HepG2 (cell line): ENCODE measurements at regions of chr9 and their contacts with region 1.

Region 1: DNA sequence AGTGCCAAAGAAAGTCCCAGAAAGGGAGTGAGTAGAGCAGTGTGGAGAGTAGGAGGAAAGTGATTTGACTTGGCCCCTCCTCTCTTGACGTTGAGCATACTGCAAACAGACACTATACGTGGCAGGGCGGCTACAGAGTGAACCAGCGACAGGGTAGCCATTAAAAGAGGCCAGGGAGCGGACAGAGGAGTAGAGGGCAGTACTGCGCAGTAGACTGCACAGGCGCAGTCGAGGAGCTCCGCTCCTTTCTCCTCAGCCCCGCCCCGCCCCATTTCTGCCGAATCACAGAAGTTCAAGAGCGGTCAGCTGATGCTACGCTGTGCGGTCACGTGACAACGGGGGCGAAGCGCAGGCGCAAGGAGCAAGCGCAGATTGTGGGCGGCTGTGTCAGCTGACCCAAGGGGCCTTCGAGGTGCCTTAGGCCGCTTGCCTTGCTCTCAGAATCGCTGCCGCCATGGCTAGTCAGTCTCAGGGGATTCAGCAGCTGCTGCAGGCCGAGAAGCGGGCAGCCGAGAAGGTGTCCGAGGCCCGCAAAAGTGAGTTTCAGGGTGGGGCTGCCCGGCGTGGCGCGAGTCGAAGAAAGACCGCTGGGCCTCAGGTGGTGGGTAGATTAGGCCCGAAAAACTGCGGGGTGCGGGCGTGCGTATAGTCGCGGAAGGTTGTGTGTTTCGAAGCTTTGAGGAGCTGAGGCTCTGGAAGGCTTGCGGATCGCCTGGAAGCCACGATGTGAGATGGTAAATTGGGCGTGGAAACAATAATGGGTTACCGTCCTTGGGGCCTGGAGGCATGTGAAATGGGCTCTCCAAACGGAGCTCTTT is at the start of gene ATP6V1G1:
- DNase-seq: peak; percentile 97
- ATAC-seq: peak; percentile 97
- H3K4me3 ChIP-seq: peak within 1 kb of the TSS; percentile 84 to 96 (median 92)
- H3K27ac ChIP-seq: peak within 1 kb of the TSS; percentile 95
- H3K4me1 ChIP-seq: peaks cover 51% of the 10 kb centered on the region
- H3K27me3 ChIP-seq: peaks cover 0 to 4% of the 10 kb centered on the region in 2 experiments; a peak in 2 of 5 replicates
- CTCF ChIP-seq: peak; percentile 46
- EP300 ChIP-seq: peak in 1 of 2 experiments; percentile 15; a peak in 1 of 4 replicates
- POLR2A ChIP-seq: peak; percentile 93 to 97
- RAD21 ChIP-seq: no peak; the same call in 1 of the 2 replicates
- total RNA-seq, gene ATP6V1G1: 158 and 215 TPM in 2 replicates

Region 2: DNA sequence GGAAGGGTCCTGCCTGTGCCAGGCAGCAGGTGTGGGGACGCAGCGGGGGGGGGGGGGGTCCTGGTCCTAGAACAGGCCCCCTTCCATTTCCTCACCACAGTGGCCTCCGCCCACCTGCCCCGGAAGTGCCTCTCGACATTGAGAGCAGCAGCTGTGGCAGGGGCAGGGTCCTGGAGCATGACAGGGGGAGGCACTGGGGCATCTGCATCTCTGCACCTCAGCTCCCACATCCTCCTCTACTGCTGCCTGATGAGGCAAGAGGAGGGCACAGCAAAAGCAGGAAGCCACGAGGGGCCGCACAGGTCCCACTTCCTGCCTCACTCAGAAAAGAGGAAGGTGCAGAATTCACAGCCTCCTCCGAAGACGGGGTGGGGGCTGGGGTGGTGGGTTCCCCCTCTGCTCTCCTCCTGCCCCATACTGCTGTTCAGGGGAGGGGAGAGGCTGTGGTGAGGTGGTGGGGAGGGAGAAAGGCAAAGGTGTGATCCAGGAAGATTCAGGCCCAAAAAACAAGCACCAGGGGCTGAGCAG is 214.6 kb before region 1 on chr9:
- CTCF ChIA-PET with region 1: no interaction called
- POLR2A ChIA-PET with region 1: no interaction called
- in situ Hi-C with region 1: no loop called
- intact Hi-C with region 1: no loop called
- DNase-seq: no peak
- ATAC-seq: no peak
- H3K4me3 ChIP-seq: no peak overlapping the region
- H3K27ac ChIP-seq: no peak overlapping the region
- H3K4me1 ChIP-seq: no peaks in the 10 kb centered on the region
- H3K27me3 ChIP-seq: no peaks in the 10 kb centered on the region
- CTCF ChIP-seq: no peak
- EP300 ChIP-seq: no peak
- POLR2A ChIP-seq: no peak
- RAD21 ChIP-seq: no peak

Region 3: DNA sequence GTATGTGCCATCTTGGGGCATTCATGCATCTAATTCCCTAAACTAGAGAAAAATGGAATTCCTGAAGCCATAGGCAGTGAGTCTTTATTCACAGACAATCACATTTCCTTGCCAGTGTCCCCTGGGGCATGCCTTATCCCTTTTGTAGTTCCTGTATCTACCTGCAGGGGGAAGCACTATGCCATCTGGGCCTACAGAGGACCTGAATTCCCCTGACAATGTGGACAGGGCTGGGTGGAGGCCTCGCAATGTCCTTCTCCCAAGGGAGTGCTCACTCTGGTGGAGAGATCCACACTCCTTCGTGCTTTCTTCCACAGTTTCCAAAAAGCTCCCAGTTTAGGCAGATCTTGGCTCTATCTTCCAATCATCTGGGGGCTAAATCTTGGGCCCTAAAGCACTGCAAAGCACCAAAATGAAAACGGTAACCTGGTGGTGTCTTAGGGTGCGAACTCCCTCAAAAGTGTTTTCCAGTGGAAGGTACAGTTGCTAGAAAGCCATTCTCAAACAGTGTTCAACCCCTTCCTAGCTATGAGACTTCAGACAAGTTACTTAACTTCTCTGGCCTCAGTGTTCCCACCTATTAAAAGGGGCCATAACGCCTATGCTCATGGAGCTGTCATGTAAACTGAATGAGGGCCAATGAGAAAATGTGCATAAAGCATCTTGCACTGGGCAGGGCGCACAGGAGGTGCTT is 99.8 kb before region 1 on chr9:
- CTCF ChIA-PET with region 1: no interaction called
- POLR2A ChIA-PET with region 1: no interaction called
- in situ Hi-C with region 1: no loop called
- intact Hi-C with region 1: loop called (anchors 5 kb)
- DNase-seq: peak; percentile 71
- ATAC-seq: peak; percentile 99
- H3K4me3 ChIP-seq: no peak overlapping the region
- H3K27ac ChIP-seq: no peak overlapping the region
- H3K4me1 ChIP-seq: no peaks in the 10 kb centered on the region
- H3K27me3 ChIP-seq: no peaks in the 10 kb centered on the region
- CTCF ChIP-seq: peak; percentile 94
- EP300 ChIP-seq: no peak
- POLR2A ChIP-seq: no peak
- RAD21 ChIP-seq: peak; percentile 80

Region 4: DNA sequence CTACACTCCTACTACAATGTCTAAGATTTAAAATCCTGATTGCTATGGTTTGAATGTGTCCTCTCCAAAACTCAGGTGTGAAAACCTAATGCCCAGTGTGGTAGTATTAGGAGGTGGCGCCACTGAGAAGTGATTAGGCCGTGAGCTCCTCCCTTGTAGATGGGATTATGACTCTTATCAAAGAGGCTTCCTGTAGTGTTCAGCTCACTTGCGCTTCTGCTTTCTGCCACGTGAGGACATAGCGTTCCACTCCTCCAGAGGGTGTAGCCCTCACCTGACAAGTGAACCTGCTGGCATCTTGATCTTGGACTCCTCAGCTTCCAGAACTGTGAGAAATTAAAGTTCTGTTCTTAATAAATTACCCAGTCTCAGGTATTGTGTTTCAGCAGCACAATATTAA is 49.4 kb before region 1 on chr9:
- CTCF ChIA-PET with region 1: no interaction called
- POLR2A ChIA-PET with region 1: interaction called, 4 read pairs
- in situ Hi-C with region 1: no loop called
- intact Hi-C with region 1: loop called (anchors 5 kb)
- DNase-seq: peak; percentile 37
- ATAC-seq: peak; percentile 96
- H3K4me3 ChIP-seq: no peak overlapping the region
- H3K27ac ChIP-seq: no peak overlapping the region
- H3K4me1 ChIP-seq: no peaks in the 10 kb centered on the region
- H3K27me3 ChIP-seq: peaks cover 0 to 1% of the 10 kb centered on the region in 2 experiments; a peak in 2 of 5 replicates
- CTCF ChIP-seq: peak; percentile 59
- EP300 ChIP-seq: no peak
- POLR2A ChIP-seq: no peak
- RAD21 ChIP-seq: no peak

Region 5: DNA sequence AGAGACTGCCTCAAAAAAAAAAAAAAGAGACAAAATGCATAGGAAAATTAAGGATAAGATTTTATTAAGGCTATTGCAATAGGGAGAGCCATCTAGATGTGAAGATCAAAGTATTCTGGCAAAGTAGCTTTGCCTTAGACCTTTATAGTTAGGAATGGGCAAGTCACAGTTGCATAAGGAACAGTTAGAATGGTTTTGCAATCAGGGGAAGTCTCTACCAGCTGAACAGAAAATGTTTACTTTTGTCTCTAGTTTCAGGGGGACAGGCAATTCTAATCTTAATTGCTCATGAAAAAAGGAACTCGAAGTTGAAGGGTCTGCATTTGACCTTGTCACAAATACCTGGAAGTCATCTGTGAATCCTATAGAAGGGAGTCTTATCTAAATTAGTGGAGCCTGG is 13.2 kb before region 1 on chr9:
- CTCF ChIA-PET with region 1: no interaction called
- POLR2A ChIA-PET with region 1: interaction called, 47 read pairs
- in situ Hi-C with region 1: no loop called
- intact Hi-C with region 1: no loop called
- DNase-seq: no peak
- ATAC-seq: peak; percentile 58
- H3K4me3 ChIP-seq: no peak overlapping the region
- H3K27ac ChIP-seq: no peak overlapping the region
- H3K4me1 ChIP-seq: peaks cover 47% of the 10 kb centered on the region
- H3K27me3 ChIP-seq: 0 out of 5 replicates have a peak, but pooled peaks cover 0 to 1% of the 10 kb centered on the region in 2 experiments
- CTCF ChIP-seq: no peak
- EP300 ChIP-seq: peak in 1 of 2 experiments; percentile 39; a peak in 1 of 4 replicates
- POLR2A ChIP-seq: no peak
- RAD21 ChIP-seq: no peak

Region 6: DNA sequence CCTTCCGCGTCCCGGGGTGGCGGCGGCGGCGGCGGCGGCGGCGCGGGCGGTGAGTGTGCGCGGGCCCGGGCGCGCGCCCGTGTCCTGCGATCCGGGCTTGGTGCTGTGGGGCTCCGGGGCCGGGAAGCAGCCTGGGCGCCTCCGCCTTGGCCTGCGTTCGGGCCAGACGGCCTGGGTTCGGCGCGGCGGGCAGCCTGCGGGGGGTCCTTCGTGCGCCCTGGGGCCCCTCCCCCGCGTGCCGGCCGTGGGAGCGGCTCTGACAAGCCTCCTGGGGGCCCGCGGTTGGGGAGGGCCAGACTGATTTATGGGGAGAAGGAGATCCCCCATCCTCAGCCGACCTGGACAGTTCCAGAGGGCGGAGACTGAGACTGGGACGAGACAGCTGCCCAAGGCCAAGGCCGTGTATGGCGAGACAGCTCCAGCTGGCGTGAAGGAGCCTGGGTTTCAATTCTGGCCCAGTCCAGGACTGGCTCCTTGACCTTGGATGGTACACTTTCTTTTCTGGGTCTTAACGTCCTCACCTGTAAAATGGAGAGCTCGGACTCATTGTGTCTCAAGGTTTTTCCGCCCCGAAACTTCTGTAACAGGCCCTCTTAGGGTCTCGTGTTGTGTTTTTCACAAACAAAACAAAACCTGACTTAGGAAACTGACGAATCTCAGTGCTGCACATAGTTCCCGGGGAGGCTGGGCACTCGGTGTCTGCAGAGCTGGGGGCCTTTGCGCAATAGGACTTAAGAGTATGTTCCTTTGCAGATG is 24.1 kb after region 1 on chr9:
- CTCF ChIA-PET with region 1: no interaction called
- POLR2A ChIA-PET with region 1: interaction called, 27 read pairs
- in situ Hi-C with region 1: no loop called
- intact Hi-C with region 1: no loop called
- DNase-seq: no peak
- ATAC-seq: peak; percentile 78
- H3K4me3 ChIP-seq: peak overlapping the region; percentile 61 to 82 (median 72)
- H3K27ac ChIP-seq: peak overlapping the region; percentile 49
- H3K4me1 ChIP-seq: peaks cover 40% of the 10 kb centered on the region
- H3K27me3 ChIP-seq: no peaks in the 10 kb centered on the region; a peak in 1 of 5 replicates
- CTCF ChIP-seq: no peak
- EP300 ChIP-seq: no peak
- POLR2A ChIP-seq: no peak
- RAD21 ChIP-seq: no peak